HEK293 (cell line): ENCODE measurements at regions of chr5 and their contacts with region 1.

Region 1: DNA sequence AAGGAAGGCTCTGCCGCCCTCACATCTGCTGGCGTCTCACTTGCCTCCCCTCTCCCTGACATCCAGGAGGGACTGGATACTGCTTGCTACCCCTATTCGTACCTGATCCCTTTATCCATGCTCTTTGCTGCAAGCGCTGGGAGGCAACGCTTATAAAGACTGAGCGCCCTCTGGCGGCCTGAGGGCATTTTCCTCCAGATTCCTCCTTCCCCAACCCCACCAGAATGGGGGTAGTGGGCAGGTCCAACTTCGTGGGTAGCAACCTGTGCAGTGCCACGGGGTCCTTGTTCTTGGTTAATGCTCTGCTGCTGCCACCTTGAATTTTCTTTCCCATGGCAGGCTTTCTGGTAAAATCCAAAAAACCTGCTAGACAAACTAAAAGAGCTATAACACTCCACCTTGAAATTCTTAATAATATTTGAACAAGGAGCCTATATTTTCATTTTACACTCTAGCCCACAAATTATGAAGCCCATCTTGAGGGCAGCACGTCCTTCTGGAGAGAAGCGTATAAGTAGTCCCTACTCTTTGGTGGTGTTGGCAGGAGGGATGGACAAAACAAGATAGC is 52.4 kb downstream of the JADE2 start:
- H3K4me3 ChIP-seq: no peak overlapping the region
- H3K27ac ChIP-seq: no peak overlapping the region
- H3K4me1 ChIP-seq: no peaks in the 10 kb centered on the region
- CTCF ChIP-seq: peak; percentile 76

Region 2: DNA sequence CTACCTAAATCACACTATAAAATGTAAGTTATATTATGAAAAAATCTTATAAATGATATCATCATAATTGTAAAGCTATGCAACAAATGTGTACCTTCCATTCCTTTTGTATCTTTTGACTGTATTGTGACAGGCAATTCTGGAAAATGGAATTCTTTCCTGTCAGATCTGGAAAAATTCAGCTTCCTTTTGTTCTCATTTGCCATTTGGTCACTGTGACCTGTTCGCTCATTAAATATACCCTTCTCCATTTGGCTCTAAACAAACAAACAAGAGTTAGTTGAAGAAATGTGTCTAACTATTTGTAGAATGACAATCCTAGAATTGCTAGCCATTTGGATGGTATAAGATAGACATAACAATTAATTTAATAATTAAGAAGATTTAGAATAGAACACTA is 273.6 kb before region 1 on chr5:
- CTCF ChIA-PET with region 1: interaction called, 50 read pairs
- POLR2A ChIA-PET with region 1: no interaction called
- H3K4me3 ChIP-seq: no peak overlapping the region
- H3K27ac ChIP-seq: no peak overlapping the region
- H3K4me1 ChIP-seq: no peaks in the 10 kb centered on the region
- CTCF ChIP-seq: no peak

Region 3: DNA sequence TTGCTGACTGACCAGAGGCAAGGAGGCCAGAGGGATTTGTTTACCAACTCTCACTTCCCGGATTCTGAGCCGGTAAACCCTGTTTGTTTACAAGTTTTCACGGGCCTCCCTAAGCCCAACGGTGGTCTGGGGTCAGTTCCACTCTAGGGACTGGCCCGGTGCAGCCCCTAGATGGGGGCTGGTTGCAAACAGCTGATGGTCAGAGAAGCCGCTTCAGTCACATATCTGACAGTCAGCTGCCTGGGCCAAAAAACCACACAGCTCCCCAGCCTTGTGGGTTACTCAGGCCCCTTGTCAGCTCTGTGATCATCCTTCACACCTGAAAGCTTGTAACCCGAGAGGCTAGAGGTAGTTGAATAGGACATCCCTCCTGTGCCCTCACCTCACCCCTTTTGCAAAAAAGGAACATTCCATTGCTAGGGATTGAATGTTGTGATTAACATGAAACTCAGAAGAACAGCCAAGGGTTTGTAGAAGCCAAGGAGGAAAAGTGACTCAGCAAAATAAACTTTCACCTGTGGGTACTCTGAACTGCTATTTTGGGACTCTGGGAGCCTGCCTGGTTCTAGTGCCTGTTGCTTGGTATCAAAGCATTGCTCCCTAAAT is 14.4 kb after region 1 on chr5:
- CTCF ChIA-PET with region 1: interaction called, 29 read pairs
- POLR2A ChIA-PET with region 1: no interaction called
- H3K4me3 ChIP-seq: no peak overlapping the region
- H3K27ac ChIP-seq: no peak overlapping the region
- H3K4me1 ChIP-seq: no peaks in the 10 kb centered on the region
- CTCF ChIP-seq: no peak

Region 4: GRCh38 chr5:134724872-134725271 is 147.0 kb after region 1 on chr5:
- CTCF ChIA-PET with region 1: no interaction called
- POLR2A ChIA-PET with region 1: no interaction called
- H3K4me3 ChIP-seq: no peak overlapping the region
- H3K27ac ChIP-seq: no peak overlapping the region
- H3K4me1 ChIP-seq: no peaks in the 10 kb centered on the region
- CTCF ChIP-seq: no peak